ENCODE measurements at regions of chr2 and their contacts with region 1.

Region 1: GRCh38 chr2:157194097-157194688 is 63.3 kb upstream of the GALNT5 start:
- DNase-seq: no peak
- H3K4me3 ChIP-seq: no peak overlapping the region
- H3K27ac ChIP-seq: no peak overlapping the region
- H3K4me1 ChIP-seq: no peaks in the 10 kb centered on the region
- H3K27me3 ChIP-seq: no peaks in the 10 kb centered on the region
- CTCF ChIP-seq: no peak
- EP300 ChIP-seq: no peak
- POLR2A ChIP-seq: no peak

Region 2: GRCh38 chr2:155377266-155377680 is 1816.9 kb before region 1 on chr2:
- intact Hi-C with region 1: loop called in 1 of 4 experiments (anchors 10 kb)
- DNase-seq: no peak
- H3K4me3 ChIP-seq: no peak overlapping the region
- H3K27ac ChIP-seq: no peak overlapping the region
- H3K4me1 ChIP-seq: no peaks in the 10 kb centered on the region
- H3K27me3 ChIP-seq: no peaks in the 10 kb centered on the region
- CTCF ChIP-seq: no peak
- EP300 ChIP-seq: no peak
- POLR2A ChIP-seq: no peak